Activated CD8-positive, alpha-beta memory T cell treated with anti-CD3 and anti-CD28 coated beads, Interleukin-2, amount 10 ng/mL, durations not matched to agents 7 days and 5 days (primary cell): ENCODE measurements at regions of chr1 and their contacts with region 1.

Region 1: GRCh38 chr1:174999216-174999925 is 376 bp upstream of the CACYBP start:
- DNase-seq: peak; percentile 98
- ATAC-seq: peak; percentile 81
- H3K4me3 Mint-ChIP-seq: no peak overlapping the region
- H3K27ac Mint-ChIP-seq: no peak overlapping the region
- H3K4me1 Mint-ChIP-seq: peaks cover 43% of the 10 kb centered on the region
- H3K27me3 Mint-ChIP-seq: no peaks in the 10 kb centered on the region

Region 2: GRCh38 chr1:174682419-174683008 is 316.9 kb before region 1 on chr1:
- CTCF ChIA-PET with region 1: no interaction called
- DNase-seq: no peak
- ATAC-seq: no peak
- H3K4me3 Mint-ChIP-seq: no peak overlapping the region
- H3K27ac Mint-ChIP-seq: no peak overlapping the region
- H3K4me1 Mint-ChIP-seq: peaks cover 6% of the 10 kb centered on the region
- H3K27me3 Mint-ChIP-seq: no peaks in the 10 kb centered on the region

Region 3: GRCh38 chr1:174769961-174770549 is 229.3 kb before region 1 on chr1:
- CTCF ChIA-PET with region 1: interaction called, 10 read pairs
- DNase-seq: no peak
- ATAC-seq: no peak
- H3K4me3 Mint-ChIP-seq: no peak overlapping the region
- H3K27ac Mint-ChIP-seq: no peak overlapping the region
- H3K4me1 Mint-ChIP-seq: peaks cover 4% of the 10 kb centered on the region
- H3K27me3 Mint-ChIP-seq: no peaks in the 10 kb centered on the region

Region 4: DNA sequence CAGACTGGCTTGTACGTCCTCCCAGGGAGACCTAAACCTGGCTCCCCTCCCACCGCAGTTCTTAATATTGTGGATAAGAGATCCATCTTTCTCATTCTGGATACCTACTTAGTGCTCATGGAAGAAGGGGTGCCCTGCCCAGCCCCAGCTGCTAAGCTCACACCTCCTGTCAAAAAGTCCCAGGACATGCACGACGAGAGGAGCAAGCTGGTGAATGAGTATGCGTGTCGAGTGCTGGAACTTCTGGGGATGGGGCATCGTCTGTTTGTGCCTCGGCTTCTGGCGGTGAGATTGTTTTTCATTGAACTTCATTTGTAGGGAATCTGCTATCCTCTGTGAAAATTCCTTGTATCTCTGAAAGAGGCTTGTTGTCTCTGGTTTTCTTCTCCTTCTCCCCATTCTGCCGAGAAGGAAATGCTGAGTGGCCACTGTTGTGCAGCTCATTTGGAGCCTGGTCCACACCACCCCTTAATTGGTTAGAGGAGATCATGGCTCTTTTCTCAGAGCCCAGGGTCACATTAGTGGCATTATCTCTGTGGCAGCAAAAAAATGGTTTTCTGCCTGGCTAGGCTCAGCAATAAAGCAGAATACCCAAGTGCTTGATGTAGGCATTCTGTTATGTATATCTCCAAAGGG is 199.0 kb before region 1 on chr1:
- CTCF ChIA-PET with region 1: interaction called, 20 read pairs
- DNase-seq: peak; percentile 43
- ATAC-seq: peak; percentile 28
- H3K4me3 Mint-ChIP-seq: no peak overlapping the region
- H3K27ac Mint-ChIP-seq: no peak overlapping the region
- H3K4me1 Mint-ChIP-seq: peaks cover 12% of the 10 kb centered on the region
- H3K27me3 Mint-ChIP-seq: no peaks in the 10 kb centered on the region

Region 5: GRCh38 chr1:174818951-174819350 is 180.4 kb before region 1 on chr1:
- CTCF ChIA-PET with region 1: no interaction called
- DNase-seq: no peak
- ATAC-seq: no peak
- H3K4me3 Mint-ChIP-seq: no peak overlapping the region
- H3K27ac Mint-ChIP-seq: no peak overlapping the region
- H3K4me1 Mint-ChIP-seq: peaks cover 20% of the 10 kb centered on the region
- H3K27me3 Mint-ChIP-seq: no peaks in the 10 kb centered on the region

Region 6: DNA sequence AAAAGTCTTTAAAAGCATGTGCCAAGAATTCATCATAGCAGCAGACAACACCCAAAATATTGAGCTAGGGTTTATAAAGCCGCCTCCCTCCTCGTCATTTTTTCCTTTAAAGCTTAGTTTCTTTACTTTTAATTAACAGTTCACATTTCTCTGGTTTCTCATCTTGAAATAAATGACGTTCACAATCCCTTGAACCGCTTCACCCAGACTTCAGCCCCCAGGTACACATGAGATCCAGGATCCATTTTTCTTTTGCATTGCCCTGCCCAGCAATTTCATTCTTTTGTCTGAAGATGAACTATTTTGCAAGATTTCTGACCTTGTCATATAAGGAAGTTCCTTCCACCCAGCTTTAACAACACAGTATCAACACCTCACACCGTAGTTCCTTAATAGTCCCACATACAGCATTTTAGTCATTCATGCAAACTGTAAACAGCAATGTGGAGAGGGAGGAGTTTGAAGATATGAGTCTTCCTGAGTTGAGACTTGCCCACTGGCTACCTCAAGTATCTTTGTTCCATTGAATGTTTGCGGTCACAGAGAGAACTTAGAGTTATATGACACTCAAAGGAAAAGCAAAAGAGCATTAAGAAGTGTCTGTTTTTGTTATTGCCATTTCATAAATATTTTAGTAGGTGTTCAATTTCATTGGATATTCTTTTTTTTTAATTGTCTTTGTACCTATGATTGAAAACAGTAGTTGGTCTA is 35.0 kb before region 1 on chr1:
- CTCF ChIA-PET with region 1: interaction called, 13 read pairs
- DNase-seq: peak; percentile 50
- ATAC-seq: peak; percentile 78
- H3K4me3 Mint-ChIP-seq: peak overlapping the region; percentile 70
- H3K27ac Mint-ChIP-seq: peak overlapping the region; percentile 95
- H3K4me1 Mint-ChIP-seq: peaks cover 59% of the 10 kb centered on the region
- H3K27me3 Mint-ChIP-seq: no peaks in the 10 kb centered on the region

Region 7: DNA sequence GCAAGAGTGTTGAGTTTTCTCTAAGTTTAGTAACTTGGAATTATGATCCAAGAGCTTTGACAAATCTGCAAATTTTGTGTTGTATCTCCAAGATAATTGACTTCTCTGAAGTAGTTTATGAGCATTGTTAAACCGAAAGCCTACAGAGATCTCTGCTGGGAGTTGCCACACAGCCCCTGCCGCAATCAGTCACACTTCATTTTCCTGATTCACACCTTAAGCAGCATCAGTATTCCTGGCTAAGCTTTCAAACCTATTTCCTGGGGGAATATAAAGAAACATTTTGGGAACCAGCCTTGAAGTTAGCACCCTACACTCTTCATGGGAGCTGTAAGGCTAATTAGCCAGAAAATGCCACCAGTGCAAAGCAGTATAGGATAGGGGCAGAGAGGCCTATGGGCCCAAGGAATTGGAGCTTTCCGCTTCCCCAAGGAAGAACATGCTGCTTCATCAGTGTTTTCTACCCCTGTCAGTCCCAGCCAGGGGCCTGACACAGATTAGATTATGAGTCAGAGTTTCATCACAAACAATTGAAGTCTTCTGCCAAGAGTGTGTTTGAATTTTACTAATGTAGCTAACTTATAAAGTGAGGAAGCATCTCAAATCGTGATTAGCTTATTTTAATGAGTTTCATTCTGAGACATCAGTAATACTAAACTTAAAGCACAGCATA is 22.8 kb before region 1 on chr1:
- CTCF ChIA-PET with region 1: interaction called, 21 read pairs
- DNase-seq: no peak
- ATAC-seq: no peak
- H3K4me3 Mint-ChIP-seq: no peak overlapping the region
- H3K27ac Mint-ChIP-seq: peak overlapping the region; percentile 9
- H3K4me1 Mint-ChIP-seq: peaks cover 35% of the 10 kb centered on the region
- H3K27me3 Mint-ChIP-seq: no peaks in the 10 kb centered on the region

Region 8: GRCh38 chr1:174982971-174983689 is 16.2 kb before region 1 on chr1:
- CTCF ChIA-PET with region 1: interaction called, 21 read pairs
- DNase-seq: no peak
- ATAC-seq: peak; percentile 12
- H3K4me3 Mint-ChIP-seq: no peak overlapping the region
- H3K27ac Mint-ChIP-seq: no peak overlapping the region
- H3K4me1 Mint-ChIP-seq: peaks cover 5% of the 10 kb centered on the region
- H3K27me3 Mint-ChIP-seq: no peaks in the 10 kb centered on the region

Region 9: DNA sequence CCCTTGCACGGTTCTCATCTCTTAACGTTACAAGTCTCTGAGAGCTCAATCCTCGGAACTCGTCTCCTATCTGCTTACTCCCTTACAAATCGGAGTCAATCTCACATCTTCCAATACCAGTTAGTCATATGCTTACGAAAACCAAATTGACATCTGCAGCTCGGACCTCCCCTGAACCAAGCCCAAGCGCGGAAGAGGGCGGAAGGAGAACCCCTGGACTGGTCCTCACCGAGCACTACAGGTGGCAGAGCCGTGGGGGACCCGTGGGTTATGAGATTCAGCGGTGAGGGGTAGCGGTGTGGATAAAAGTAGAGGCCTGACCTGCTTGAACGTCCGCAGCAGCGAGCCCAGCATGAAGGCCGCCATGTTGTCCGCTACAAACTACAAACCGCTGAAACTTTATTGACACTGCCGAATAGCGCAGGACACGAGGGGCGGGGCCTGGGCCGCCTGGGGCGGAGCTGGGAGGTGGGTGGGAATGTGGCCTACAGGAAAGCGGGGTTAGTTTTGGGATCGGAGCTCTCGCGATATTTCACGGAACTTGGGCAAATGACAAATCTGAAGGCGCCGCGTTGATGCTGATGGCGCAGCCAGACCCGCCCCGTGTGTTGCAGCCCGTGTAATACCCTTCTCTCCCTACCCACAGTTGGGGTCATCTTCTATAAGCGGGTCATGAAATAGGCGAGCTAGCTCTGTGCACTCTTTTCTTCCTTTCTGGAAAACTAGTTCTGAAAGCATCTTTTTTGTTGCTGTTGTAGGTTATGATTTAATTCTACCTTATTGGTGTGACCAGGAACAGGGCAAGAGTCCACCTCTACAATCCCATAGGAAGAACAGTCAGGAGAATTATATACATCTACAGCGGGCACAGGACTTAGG is 23.9 kb after region 1 on chr1 and contains the start of gene MRPS14:
- CTCF ChIA-PET with region 1: interaction called, 39 read pairs
- DNase-seq: peak; percentile 99
- ATAC-seq: peak; percentile 94
- H3K4me3 Mint-ChIP-seq: peak within 1 kb of the TSS; percentile 90
- H3K27ac Mint-ChIP-seq: peak within 1 kb of the TSS; percentile 88
- H3K4me1 Mint-ChIP-seq: peaks cover 32% of the 10 kb centered on the region
- H3K27me3 Mint-ChIP-seq: no peaks in the 10 kb centered on the region
- total RNA-seq, gene MRPS14: 33.5 to 40.4 TPM